AG04450 (cell line): ENCODE measurements at regions of chr6 and their contacts with region 1.

Region 1: DNA sequence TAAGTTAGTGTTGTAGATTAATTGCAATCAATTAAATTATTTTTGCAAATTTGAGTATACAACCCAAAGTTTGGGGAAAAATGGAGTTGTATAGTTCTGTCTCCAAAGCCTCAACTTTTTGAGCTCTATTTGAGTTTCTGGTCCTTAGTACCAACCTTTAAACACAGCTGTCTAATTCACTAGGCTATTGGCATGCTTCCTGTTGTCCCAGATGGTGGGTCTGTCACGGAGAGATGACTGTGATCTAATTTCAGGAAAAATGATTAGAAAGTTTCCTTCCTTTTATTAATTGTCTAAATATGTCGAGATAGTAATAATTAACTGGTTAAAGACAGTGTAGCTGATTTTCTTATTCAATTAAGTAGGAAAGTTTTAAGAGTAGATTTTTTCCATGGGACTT is 109.6 kb downstream of the SCAF8 start:
- DNase-seq: no peak
- H3K4me3 ChIP-seq: no peak overlapping the region
- H3K27ac ChIP-seq: no peak overlapping the region
- H3K27me3 ChIP-seq: no peaks in the 10 kb centered on the region
- CTCF ChIP-seq: no peak

Region 2: DNA sequence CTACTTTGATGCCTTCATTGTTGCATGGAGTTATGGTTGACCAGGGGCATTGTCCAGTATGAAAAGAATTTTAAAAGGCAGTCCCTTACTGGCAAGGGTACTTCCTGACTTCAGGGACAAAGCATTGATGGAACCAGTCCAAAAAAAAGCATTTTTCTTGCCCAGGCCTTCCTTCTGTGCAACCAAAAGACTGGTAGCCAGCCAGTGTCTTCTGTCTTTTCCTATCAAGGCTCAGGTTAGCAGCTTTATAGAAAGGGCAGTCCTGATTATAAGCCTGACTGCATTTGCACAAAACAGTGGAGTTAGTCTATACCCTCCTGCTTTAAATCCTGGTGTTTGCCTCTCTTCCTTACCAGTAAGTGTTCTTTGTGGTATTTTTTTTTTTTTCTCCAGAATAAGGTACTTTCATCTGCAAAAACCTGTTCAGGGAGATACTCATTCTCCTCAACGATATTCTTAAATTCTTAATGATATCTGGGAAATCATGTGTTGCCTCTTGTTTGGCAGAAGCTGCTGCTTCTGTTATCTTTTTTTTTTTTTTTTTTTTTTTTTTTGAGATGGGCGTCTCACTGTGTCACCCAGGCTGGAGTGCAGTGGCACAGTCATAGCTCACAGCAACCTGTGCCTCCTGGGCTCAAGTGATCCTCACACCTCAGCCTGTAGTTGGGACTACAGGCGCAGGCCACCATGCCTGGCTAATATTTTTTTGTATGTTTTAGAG is 75.7 kb before region 1 on chr6:
- CTCF ChIA-PET with region 1: no interaction called
- POLR2A ChIA-PET with region 1: no interaction called
- DNase-seq: no peak
- H3K4me3 ChIP-seq: no peak overlapping the region
- H3K27ac ChIP-seq: no peak overlapping the region
- H3K27me3 ChIP-seq: no peaks in the 10 kb centered on the region
- CTCF ChIP-seq: no peak

Region 3: GRCh38 chr6:154805288-154805911 is 37.4 kb before region 1 on chr6:
- CTCF ChIA-PET with region 1: interaction called, 12 read pairs
- POLR2A ChIA-PET with region 1: no interaction called
- DNase-seq: peak; percentile 32
- H3K4me3 ChIP-seq: no peak overlapping the region
- H3K27ac ChIP-seq: no peak overlapping the region
- H3K27me3 ChIP-seq: no peaks in the 10 kb centered on the region
- CTCF ChIP-seq: peak; percentile 57